H1 (cell line): ENCODE measurements at regions of chr17 and their contacts with region 1.

Region 1: GRCh38 chr17:76681222-76682137 is 29.3 kb downstream of the MXRA7 start:
- DNase-seq: peak; percentile 62 to 90
- H3K4me3 ChIP-seq: no peak overlapping the region
- H3K27ac ChIP-seq: no peak overlapping the region
- H3K4me1 ChIP-seq: peaks cover 0 to 19% (median 10%) of the 10 kb centered on the region in 4 experiments; a peak in 5 of 7 replicates
- H3K27me3 ChIP-seq: no peaks in the 10 kb centered on the region
- CTCF ChIP-seq: peak; percentile 92 to 95 (median 94)
- EP300 ChIP-seq: no peak
- POLR2A ChIP-seq: no peak
- RAD21 ChIP-seq: peak; percentile 84 to 91

Region 2: DNA sequence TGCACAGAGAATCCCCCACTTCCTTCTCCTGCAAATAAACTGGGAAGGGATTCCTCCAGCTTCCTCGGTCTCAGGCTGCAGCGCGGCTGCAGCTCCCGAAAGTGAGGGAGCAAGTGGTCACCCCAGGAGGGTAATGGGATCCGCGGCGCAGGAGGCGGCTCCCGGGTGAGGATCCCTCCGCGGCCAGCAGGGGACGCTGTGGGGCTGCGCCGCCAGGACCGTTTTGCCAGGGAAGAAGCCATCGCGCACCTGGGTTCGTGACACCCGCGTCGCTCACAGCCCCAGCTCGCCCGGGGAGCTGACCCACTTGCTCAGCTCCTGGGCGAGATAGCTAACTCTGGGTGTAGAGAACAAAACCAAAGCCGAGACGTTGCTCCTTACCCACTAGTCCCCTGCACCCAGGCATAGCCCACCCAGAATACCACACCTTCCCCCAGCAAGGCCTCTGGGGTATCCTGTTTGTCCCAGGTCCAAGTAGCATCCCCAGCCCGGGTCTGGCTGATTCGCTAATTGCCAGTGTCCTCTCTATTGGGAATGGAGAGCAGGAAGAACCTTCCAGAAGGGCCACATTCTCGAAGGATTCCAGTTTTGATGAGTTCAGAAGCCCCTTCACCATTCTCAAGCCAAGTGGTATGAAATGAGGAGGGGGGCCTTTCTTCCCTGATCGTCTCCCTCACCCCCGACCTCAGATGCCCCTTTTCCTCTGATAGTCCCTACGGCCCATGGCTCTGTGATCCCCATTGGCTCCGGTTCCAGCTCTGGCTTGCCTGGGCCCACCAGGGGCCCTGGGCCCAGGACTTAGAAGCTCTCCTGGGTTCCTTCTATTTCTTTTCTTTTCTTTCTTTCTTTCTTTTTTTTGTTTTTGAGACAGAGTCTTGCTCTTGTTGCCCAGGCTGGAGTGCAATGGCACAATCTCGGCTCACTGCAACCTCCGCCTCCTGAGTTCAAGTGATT is 158.1 kb before region 1 on chr17:
- CTCF ChIA-PET with region 1: interaction called, 17 read pairs
- POLR2A ChIA-PET with region 1: no interaction called
- DNase-seq: peak; percentile 49 to 96
- H3K4me3 ChIP-seq: no peak overlapping the region
- H3K27ac ChIP-seq: no peak overlapping the region
- H3K4me1 ChIP-seq: peaks cover 0 to 19% (median 10%) of the 10 kb centered on the region in 4 experiments; a peak in 6 of 7 replicates
- H3K27me3 ChIP-seq: peaks cover 0 to 5% (median 0%) of the 10 kb centered on the region in 4 experiments; a peak in 3 of 7 replicates
- CTCF ChIP-seq: peak; percentile 97 to 99 (median 99)
- EP300 ChIP-seq: peak in 1 of 2 experiments; percentile 43; a peak in 1 of 3 replicates
- POLR2A ChIP-seq: no peak
- RAD21 ChIP-seq: peak; percentile 91 to 92

Region 3: GRCh38 chr17:76585818-76586593 is 95.5 kb before region 1 on chr17 and contains the start of gene ST6GALNAC2:
- CTCF ChIA-PET with region 1: interaction called, 10 read pairs
- POLR2A ChIA-PET with region 1: no interaction called
- DNase-seq: peak in 1 of 2 experiments; percentile 67
- H3K4me3 ChIP-seq: peak within 1 kb of the TSS; percentile 42 to 81 (median 48)
- H3K27ac ChIP-seq: no peak within 1 kb of the TSS
- H3K4me1 ChIP-seq: peaks cover 0 to 22% (median 10%) of the 10 kb centered on the region in 4 experiments; a peak in 6 of 7 replicates
- H3K27me3 ChIP-seq: peaks cover 33 to 64% (median 51%) of the 10 kb centered on the region in 4 experiments
- CTCF ChIP-seq: no peak
- EP300 ChIP-seq: no peak
- POLR2A ChIP-seq: no peak
- RAD21 ChIP-seq: no peak; a peak in 1 of 4 replicates
- total RNA-seq, gene ST6GALNAC2: not detected in 2 replicates

Region 4: GRCh38 chr17:76631829-76632565 is 49.5 kb before region 1 on chr17:
- CTCF ChIA-PET with region 1: interaction called, 58 read pairs
- POLR2A ChIA-PET with region 1: no interaction called
- DNase-seq: no peak
- H3K4me3 ChIP-seq: no peak overlapping the region
- H3K27ac ChIP-seq: no peak overlapping the region
- H3K4me1 ChIP-seq: peaks cover 0 to 6% (median 1%) of the 10 kb centered on the region in 4 experiments; a peak in 4 of 7 replicates
- H3K27me3 ChIP-seq: no peaks in the 10 kb centered on the region
- CTCF ChIP-seq: no peak
- EP300 ChIP-seq: no peak
- POLR2A ChIP-seq: no peak
- RAD21 ChIP-seq: no peak

Region 5: DNA sequence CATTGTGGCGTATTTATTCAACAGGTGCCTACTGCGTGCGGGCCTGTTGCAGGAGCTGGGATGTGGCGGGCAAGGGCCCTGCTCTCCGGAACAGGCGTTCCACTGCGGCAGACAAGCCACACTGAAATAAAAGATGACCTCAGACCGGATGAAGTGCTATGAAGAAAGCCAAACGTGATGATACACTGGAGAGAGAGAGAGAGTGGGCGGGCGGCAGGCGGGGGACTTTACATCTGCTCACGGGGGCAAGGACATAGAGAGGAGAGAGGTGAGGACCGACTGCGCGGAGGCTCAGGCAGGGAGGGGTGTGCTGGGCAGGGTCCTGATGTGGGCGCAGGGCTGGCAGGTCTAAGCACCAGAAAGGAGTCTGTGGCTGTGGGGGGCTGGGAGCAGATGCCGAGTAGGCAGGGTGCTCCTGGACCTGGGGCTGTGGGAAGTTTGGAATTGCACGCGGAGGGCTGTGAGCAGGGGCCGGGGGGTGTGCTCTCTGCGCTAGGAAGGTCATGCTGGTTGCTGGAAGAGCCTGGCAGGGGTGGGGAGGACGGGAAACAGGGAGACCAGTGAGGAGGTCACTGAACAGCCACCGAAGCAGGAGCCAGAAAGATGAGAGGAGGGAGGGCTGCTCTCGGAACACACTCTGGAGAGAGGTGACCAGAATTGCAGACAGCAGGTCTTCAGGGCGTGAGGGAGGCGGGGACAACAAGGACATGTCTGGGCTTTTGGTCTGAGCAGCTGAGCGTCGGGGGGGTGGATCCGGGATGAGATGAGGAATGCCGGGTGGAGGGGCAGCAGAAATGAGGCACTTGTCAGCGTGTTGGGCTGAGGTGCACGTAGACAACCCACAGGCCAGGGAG is 19.4 kb after region 1 on chr17:
- CTCF ChIA-PET with region 1: interaction called, 33 read pairs
- POLR2A ChIA-PET with region 1: interaction called, 4 read pairs
- DNase-seq: no peak
- H3K4me3 ChIP-seq: no peak overlapping the region
- H3K27ac ChIP-seq: no peak overlapping the region
- H3K4me1 ChIP-seq: peaks cover 0 to 29% (median 23%) of the 10 kb centered on the region in 4 experiments; a peak in 6 of 7 replicates
- H3K27me3 ChIP-seq: no peaks in the 10 kb centered on the region; a peak in 1 of 7 replicates
- CTCF ChIP-seq: no peak
- EP300 ChIP-seq: no peak
- POLR2A ChIP-seq: no peak
- RAD21 ChIP-seq: no peak